ENCODE measurements at regions of chr6 and their contacts with region 1.

Region 1: DNA sequence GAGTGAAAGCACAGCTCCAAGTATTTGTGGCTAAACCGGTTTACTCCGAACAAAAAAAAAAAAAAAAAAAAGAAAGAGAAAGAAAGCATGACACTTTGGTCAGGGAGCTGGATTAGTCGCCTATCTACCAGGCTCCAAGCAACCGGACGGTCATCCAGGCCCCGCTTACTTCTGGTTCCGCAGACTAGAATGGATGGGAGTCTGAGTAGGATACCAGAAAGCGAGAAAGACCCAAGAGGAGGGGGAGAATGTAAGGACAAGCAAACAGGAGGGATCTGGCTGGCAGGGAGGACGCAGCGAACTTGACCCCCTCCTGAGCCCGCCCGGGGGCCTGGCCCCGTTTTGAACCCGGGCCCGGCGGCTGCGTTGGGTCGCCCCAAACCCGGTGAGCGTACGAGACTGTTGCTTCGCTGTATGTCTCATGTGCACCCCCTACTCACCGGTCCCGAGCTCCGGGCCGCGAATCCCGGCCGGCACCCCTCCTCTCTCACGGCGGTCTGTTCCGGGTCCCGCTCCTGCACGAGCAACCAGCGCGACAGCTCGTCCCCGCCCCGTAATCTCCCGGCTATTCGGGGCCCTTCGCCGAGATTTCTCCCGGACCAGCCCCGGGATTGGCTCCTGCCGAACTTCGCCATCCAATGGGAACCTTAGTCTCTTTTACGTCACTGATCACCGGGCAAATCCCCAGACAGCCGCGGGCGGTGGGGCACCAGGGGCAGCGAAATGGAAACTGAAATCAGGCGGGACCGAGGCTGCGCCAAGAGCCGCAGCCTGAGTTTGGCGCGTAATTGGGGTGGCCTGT is at the start of gene TRIM26:
- DNase-seq: peak; percentile 97 to 99 (median 98)
- H3K4me3 ChIP-seq: peak within 1 kb of the TSS; percentile 78 to 84
- H3K4me3 Mint-ChIP-seq: peak within 1 kb of the TSS; percentile 94 to 99 (median 98)
- H3K27ac ChIP-seq: peak within 1 kb of the TSS; percentile 97
- H3K27ac Mint-ChIP-seq: peak within 1 kb of the TSS; percentile 98 to 100 (median 99)
- H3K4me1 ChIP-seq: peaks cover 50% of the 10 kb centered on the region
- H3K4me1 Mint-ChIP-seq: peaks cover 46 to 72% (median 53%) of the 10 kb centered on the region in 4 donors
- H3K27me3 ChIP-seq: no peaks in the 10 kb centered on the region
- H3K27me3 Mint-ChIP-seq: no peaks in the 10 kb centered on the region
- total RNA-seq, gene TRIM26: 60.0 to 60.7 TPM

Region 2: GRCh38 chr6:30066577-30067459 is 146.2 kb before region 1 on chr6 and contains the start of gene PPP1R11:
- CTCF ChIA-PET with region 1: no interaction called
- POLR2A ChIA-PET with region 1: interaction called, 15 read pairs
- intact Hi-C with region 1: loop called (anchors 2 kb)
- DNase-seq: peak; percentile 98 to 100 (median 99)
- H3K4me3 ChIP-seq: peak within 1 kb of the TSS; percentile 84 to 90
- H3K4me3 Mint-ChIP-seq: peak within 1 kb of the TSS; percentile 92 to 100 (median 97)
- H3K27ac ChIP-seq: peak within 1 kb of the TSS; percentile 99
- H3K27ac Mint-ChIP-seq: peak within 1 kb of the TSS; percentile 95 to 100 (median 99)
- H3K4me1 ChIP-seq: peaks cover 50% of the 10 kb centered on the region
- H3K4me1 Mint-ChIP-seq: peaks cover 35 to 75% (median 52%) of the 10 kb centered on the region in 4 donors
- H3K27me3 ChIP-seq: no peaks in the 10 kb centered on the region
- H3K27me3 Mint-ChIP-seq: peaks cover 4 to 6% of the 10 kb centered on the region in 2 donors
- total RNA-seq, gene PPP1R11: 65.2 to 66.2 TPM

Region 3: GRCh38 chr6:30194797-30195690 is 18.0 kb before region 1 on chr6:
- CTCF ChIA-PET with region 1: no interaction called
- POLR2A ChIA-PET with region 1: interaction called, 11 read pairs
- intact Hi-C with region 1: no loop called
- DNase-seq: no peak
- H3K4me3 ChIP-seq: no peak overlapping the region
- H3K4me3 Mint-ChIP-seq: no peak overlapping the region
- H3K27ac ChIP-seq: no peak overlapping the region
- H3K27ac Mint-ChIP-seq: peak overlapping the region in 6 of 7 donors; percentile 62 to 86 (median 73)
- H3K4me1 ChIP-seq: no peaks in the 10 kb centered on the region
- H3K4me1 Mint-ChIP-seq: peaks cover 0 to 9% (median 5%) of the 10 kb centered on the region in 4 donors
- H3K27me3 ChIP-seq: no peaks in the 10 kb centered on the region
- H3K27me3 Mint-ChIP-seq: no peaks in the 10 kb centered on the region

Region 4: DNA sequence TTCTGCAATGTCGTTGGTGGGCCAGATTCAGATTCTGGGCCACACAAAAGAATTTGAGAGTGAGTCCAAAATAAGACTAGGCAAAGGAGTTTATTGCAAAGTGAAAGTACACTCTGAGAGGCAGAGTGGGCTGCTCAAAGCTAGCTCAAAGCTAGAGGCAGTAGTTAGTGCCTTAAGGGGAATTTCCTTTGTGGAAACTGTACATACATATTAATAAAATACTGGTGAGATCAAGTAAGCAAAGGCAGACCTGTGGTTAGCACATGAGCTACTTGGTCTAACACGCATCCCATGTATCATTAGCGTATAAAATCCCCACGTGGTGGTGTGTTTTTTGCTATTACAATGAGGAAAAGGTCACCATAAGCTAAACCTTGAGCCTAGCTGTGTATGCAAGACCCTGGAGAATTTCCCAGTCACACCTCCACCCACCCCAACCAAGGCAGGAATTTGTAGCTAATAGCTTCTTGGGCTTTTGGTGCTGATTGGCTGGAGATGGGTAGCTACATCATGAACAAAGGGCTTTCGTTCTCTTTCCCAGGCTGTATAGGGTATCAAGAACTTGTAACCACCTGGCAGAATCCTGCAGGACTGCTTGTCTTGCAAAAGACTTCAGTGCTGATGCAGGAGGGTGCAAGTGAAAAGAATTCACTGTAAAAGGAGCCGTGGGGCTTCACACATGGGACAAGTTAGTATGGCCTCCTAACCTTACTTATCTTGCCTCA is 14.9 kb after region 1 on chr6:
- CTCF ChIA-PET with region 1: interaction called, 22 read pairs
- POLR2A ChIA-PET with region 1: interaction called, 27 read pairs
- intact Hi-C with region 1: no loop called
- DNase-seq: peak in 4 of 5 donors; percentile 13 to 40 (median 24)
- H3K4me3 ChIP-seq: peak overlapping the region; percentile 0 to 1
- H3K4me3 Mint-ChIP-seq: peak overlapping the region; percentile 46 to 79 (median 66)
- H3K27ac ChIP-seq: no peak overlapping the region
- H3K27ac Mint-ChIP-seq: peak overlapping the region; percentile 43 to 85 (median 76)
- H3K4me1 ChIP-seq: peaks cover 13% of the 10 kb centered on the region
- H3K4me1 Mint-ChIP-seq: peaks cover 8 to 17% (median 13%) of the 10 kb centered on the region in 4 donors
- H3K27me3 ChIP-seq: no peaks in the 10 kb centered on the region
- H3K27me3 Mint-ChIP-seq: peaks cover 0 to under 1% of the 10 kb centered on the region in 2 donors

Region 5: GRCh38 chr6:30326526-30327260 is 113.6 kb after region 1 on chr6 and contains the start of gene TRIM39:
- CTCF ChIA-PET with region 1: interaction called, 3 read pairs
- POLR2A ChIA-PET with region 1: interaction called, 46 read pairs
- intact Hi-C with region 1: loop called (anchors 1 kb)
- DNase-seq: peak; percentile 91 to 94 (median 92)
- H3K4me3 ChIP-seq: peak within 1 kb of the TSS; percentile 68 to 82
- H3K4me3 Mint-ChIP-seq: peak within 1 kb of the TSS; percentile 92 to 98 (median 94)
- H3K27ac ChIP-seq: peak within 1 kb of the TSS; percentile 99
- H3K27ac Mint-ChIP-seq: peak within 1 kb of the TSS; percentile 97 to 100 (median 100)
- H3K4me1 ChIP-seq: peaks cover 53% of the 10 kb centered on the region
- H3K4me1 Mint-ChIP-seq: peaks cover 41 to 69% (median 56%) of the 10 kb centered on the region in 4 donors
- H3K27me3 ChIP-seq: no peaks in the 10 kb centered on the region
- H3K27me3 Mint-ChIP-seq: no peaks in the 10 kb centered on the region
- total RNA-seq, gene TRIM39: 27.7 to 30.9 TPM

Region 6: GRCh38 chr6:30344868-30345671 is 132.0 kb after region 1 on chr6 and contains the start of gene RPP21:
- CTCF ChIA-PET with region 1: no interaction called
- POLR2A ChIA-PET with region 1: interaction called, 4 read pairs
- intact Hi-C with region 1: loop called (anchors 1 kb)
- DNase-seq: peak; percentile 82 to 87 (median 85)
- H3K4me3 ChIP-seq: peak within 1 kb of the TSS; percentile 59 to 78
- H3K4me3 Mint-ChIP-seq: peak within 1 kb of the TSS; percentile 87 to 95 (median 92)
- H3K27ac ChIP-seq: peak within 1 kb of the TSS; percentile 87
- H3K27ac Mint-ChIP-seq: peak within 1 kb of the TSS; percentile 77 to 98 (median 96)
- H3K4me1 ChIP-seq: peaks cover 20% of the 10 kb centered on the region
- H3K4me1 Mint-ChIP-seq: peaks cover 22 to 42% (median 25%) of the 10 kb centered on the region in 4 donors
- H3K27me3 ChIP-seq: no peaks in the 10 kb centered on the region
- H3K27me3 Mint-ChIP-seq: peaks cover 0 to 2% of the 10 kb centered on the region in 2 donors
- total RNA-seq, gene RPP21: 51.6 to 57.6 TPM

Region 7: DNA sequence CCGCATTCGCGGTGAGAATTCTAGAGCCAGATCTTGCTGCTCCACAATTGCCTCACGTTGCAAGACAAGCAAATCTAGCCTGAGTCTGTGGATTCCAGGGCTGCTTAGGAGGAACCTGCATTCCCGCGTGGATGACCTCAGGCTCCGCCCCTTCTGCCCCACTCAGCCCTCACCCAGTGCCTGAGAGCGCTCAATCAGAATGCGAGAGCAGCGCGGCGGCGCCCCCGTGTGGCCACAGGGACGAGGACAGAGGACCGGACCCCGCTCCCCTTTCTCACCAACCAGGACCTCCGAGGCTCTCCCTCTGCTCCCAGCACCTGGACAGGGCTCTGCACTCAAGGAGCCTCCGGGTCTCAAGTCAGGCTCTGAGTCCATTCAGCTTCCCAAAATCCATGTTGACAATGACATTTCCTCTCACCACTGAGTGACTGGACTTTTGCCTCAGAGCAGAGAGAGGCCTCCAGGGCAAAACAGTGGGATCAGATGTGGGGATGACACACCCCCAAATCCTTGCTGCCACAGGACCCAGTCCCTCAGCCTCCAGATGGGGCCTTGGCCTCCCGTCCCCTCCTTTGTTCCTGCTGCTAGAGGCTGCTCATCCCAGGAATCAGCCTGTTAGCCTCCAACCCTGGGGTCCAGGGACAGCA is 183.9 kb after region 1 on chr6:
- CTCF ChIA-PET with region 1: interaction called, 14 read pairs
- POLR2A ChIA-PET with region 1: interaction called, 4 read pairs
- intact Hi-C with region 1: no loop called
- DNase-seq: peak; percentile 72 to 77 (median 75)
- H3K4me3 ChIP-seq: no peak overlapping the region
- H3K4me3 Mint-ChIP-seq: no peak overlapping the region
- H3K27ac ChIP-seq: no peak overlapping the region
- H3K27ac Mint-ChIP-seq: no peak overlapping the region
- H3K4me1 ChIP-seq: no peaks in the 10 kb centered on the region
- H3K4me1 Mint-ChIP-seq: peaks cover 0 to 5% (median 0%) of the 10 kb centered on the region in 4 donors
- H3K27me3 ChIP-seq: no peaks in the 10 kb centered on the region
- H3K27me3 Mint-ChIP-seq: peaks cover 11 to 26% of the 10 kb centered on the region in 2 donors